Mammary epithelial cell (primary cell): ENCODE measurements at regions of chr15 and their contacts with region 1.

Region 1: GRCh38 chr15:81955382-81956062 is 90.3 kb downstream of the MEX3B start:
- DNase-seq: no peak
- H3K4me3 ChIP-seq: no peak overlapping the region
- H3K27ac ChIP-seq: no peak overlapping the region
- H3K4me1 ChIP-seq: no peaks in the 10 kb centered on the region
- H3K27me3 ChIP-seq: no peaks in the 10 kb centered on the region
- CTCF ChIP-seq: no peak

Region 2: DNA sequence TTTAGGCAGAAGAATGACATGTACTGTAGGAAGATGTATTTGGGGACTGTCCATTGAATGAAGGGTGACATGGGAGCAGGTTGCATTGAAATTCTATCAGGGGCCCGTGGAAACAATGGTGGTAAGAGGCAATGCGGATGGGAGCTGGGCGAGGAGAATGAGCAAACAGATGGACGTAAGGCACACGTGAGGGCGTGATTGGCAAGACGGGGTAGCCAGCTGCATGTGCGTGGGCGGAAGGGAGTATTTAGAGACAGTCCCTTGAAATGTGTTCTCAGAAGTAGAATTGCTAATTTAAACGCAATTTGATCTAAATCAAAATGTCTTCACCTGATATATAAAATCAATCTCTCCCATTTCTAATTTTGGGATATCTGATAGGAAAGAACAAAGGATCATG is 28.0 kb after region 1 on chr15:
- CTCF ChIA-PET with region 1: no interaction called
- dilution Hi-C with region 1: no loop called
- in situ Hi-C with region 1: no loop called
- intact Hi-C with region 1: no loop called
- DNase-seq: no peak
- H3K4me3 ChIP-seq: no peak overlapping the region
- H3K27ac ChIP-seq: no peak overlapping the region
- H3K4me1 ChIP-seq: no peaks in the 10 kb centered on the region
- H3K27me3 ChIP-seq: no peaks in the 10 kb centered on the region
- CTCF ChIP-seq: no peak

Region 3: DNA sequence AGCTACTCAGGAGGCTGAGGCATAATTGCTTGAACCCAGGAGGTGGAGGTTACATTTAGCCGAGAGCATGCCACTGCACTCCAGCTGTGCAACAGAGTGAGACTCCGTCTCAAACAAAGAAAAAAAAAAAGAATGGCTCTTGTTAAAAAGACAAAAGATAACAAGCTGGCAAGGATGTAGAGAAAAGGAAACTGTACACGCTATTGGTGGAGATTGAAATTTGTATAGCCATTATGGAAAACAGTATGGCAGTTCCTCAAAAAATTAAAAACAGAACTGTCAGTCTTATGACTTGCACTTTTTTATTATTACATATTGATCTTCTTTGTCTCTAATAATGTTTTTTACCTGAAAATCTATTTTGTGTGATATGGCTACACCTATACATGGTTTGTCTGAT is 48.4 kb after region 1 on chr15:
- CTCF ChIA-PET with region 1: no interaction called
- dilution Hi-C with region 1: loop called (anchors 5 kb)
- in situ Hi-C with region 1: no loop called
- intact Hi-C with region 1: no loop called
- DNase-seq: no peak
- H3K4me3 ChIP-seq: no peak overlapping the region
- H3K27ac ChIP-seq: no peak overlapping the region
- H3K4me1 ChIP-seq: no peaks in the 10 kb centered on the region
- H3K27me3 ChIP-seq: no peaks in the 10 kb centered on the region
- CTCF ChIP-seq: no peak